Posterior vena cava (tissue), 2 donors: ENCODE measurements at regions of chr6 and their contacts with region 1.

Region 1: DNA sequence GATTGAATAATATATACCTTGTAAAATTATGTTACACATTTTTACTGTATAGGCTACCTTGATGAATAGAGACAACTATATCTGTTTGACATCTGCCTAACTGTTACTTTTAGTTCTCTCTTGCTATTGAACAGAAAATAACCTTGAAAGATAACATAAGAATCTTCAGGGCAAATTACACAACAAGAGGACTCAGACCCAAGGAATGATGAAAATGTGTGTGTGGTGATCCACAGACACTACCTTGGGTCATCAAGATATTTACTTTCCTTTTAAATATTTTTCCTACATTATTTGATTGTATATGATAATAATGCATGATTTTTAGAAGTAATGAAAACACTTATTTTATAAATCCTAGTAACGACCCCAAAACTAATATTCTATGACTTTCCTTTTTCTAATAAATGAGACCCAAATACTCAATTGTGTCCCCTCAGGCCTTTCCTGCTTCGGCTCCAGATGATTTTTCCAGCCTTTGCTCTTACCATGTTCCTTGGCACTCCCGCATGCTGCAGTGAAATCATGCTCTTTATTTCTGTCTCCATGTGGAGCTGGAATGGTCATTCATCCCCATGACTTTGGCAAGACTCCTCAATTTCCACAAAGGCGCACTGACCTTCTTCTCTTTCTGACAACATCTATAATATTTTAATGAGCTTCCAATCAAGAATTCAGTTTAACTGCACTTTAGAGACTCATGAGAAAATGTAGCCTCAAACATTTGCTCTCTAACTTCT is 187.6 kb downstream of the EPM2A start:
- DNase-seq: no peak

Region 2: GRCh38 chr6:145406508-145407182 is 141.1 kb before region 1 on chr6:
- intact Hi-C with region 1: no loop called
- DNase-seq: no peak

Region 3: GRCh38 chr6:145513956-145514483 is 33.7 kb before region 1 on chr6:
- intact Hi-C with region 1: loop called in 1 of 2 experiments (anchors 2 kb)
- DNase-seq: no peak